Kidney (tissue), 22 donors: ENCODE measurements at regions of chr6 and their contacts with region 1.

Region 1: DNA sequence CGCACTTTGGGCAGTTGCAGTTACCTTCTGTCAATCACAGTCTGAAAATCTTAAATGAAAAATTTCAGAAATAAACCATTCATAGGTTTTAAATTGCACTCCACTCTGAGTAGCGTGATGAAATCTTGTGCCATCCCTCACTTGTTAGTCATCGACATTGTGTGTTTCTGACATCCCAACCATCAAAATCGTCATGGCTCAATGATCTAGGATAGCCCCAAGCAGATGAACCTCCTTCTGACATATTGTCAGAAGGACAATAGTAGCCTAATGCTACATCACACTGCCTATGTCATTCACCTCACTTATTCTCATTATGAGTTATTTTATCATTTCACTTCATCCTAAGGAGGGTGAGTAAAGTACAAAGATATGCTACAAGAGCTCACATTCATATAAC is 284.8 kb downstream of the PTPRK start:
- DNase-seq: no peak
- H3K4me3 ChIP-seq: no peak overlapping the region
- H3K27ac ChIP-seq: no peak overlapping the region
- H3K4me1 ChIP-seq: no peaks in the 10 kb centered on the region
- H3K27me3 ChIP-seq: no peaks in the 10 kb centered on the region
- CTCF ChIP-seq: no peak

Region 2: DNA sequence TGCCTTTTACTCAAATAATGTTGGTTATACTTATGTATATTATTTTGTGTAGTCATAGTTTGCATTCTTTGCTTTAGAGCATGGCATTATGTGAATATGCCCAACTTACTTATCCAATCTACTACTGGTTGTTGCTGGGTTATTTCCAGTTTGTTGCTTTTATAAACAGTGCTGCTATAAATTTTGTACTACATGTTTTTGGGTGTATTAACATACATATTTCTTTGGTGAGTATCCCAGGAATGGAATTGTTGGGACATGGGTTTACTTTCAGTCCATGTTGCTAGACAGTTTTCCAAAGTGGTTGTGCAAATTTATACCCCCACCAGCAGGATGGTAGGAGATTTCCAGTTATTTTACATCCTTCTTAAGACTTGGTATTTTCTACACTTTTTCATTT is 177.6 kb before region 1 on chr6:
- intact Hi-C with region 1: loop called (anchors 10 kb)
- DNase-seq: no peak
- H3K4me3 ChIP-seq: no peak overlapping the region
- H3K27ac ChIP-seq: no peak overlapping the region
- H3K4me1 ChIP-seq: no peaks in the 10 kb centered on the region
- H3K27me3 ChIP-seq: no peaks in the 10 kb centered on the region
- CTCF ChIP-seq: no peak

Region 3: DNA sequence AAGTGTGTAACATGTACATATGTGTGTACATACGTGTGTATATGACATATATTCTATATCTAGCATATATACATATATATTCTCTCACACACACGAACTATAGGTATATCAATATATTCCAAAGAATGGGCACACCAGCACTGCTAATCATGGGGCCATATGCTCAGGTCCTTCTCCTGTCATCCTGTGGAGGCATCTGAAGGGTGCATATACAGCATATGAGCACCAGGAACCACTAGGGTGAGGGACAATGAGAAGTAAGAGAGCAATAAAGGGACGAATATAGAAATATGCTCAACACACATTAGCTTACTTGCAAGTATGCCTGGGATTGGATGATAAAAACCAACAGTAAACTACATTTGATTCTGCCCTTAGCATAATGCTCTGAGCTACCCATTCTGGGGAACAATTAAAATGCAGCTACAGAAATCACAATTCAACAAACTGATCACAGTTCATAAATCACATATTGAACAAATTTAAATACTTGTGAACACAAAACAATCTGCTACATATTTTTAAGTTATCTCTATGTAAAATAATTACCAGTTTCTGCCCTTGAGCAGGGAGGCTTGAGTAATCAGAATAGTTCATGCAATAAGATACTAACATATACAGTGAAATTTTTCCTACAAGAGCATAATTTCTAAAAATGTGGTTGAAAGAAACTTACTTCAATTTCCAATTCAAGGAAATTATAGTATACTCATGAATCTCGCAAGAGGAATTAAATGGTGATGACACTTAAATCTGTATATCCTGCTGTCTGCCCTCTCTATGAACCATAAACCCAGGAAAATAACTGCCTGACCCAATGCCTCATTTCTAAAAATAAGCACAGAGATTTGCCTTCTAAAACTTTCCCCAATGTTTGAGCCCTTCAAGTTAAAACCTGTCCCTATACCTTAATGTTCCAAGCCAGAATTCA is 62.5 kb before region 1 on chr6:
- intact Hi-C with region 1: no loop called
- DNase-seq: no peak
- H3K4me3 ChIP-seq: no peak overlapping the region
- H3K27ac ChIP-seq: no peak overlapping the region
- H3K4me1 ChIP-seq: no peaks in the 10 kb centered on the region
- H3K27me3 ChIP-seq: no peaks in the 10 kb centered on the region
- CTCF ChIP-seq: no peak

Region 4: GRCh38 chr6:128617285-128617684 is 381.7 kb after region 1 on chr6:
- intact Hi-C with region 1: no loop called
- DNase-seq: no peak
- H3K4me3 ChIP-seq: no peak overlapping the region
- H3K27ac ChIP-seq: no peak overlapping the region
- H3K4me1 ChIP-seq: no peaks in the 10 kb centered on the region
- H3K27me3 ChIP-seq: no peaks in the 10 kb centered on the region
- CTCF ChIP-seq: no peak